Activated naive CD4-positive, alpha-beta T cell treated with anti-CD3 and anti-CD28 coated beads for 36 hours (primary cell): ENCODE measurements at regions of chr6 and their contacts with region 1.

Region 1: GRCh38 chr6:11224252-11224965 is 8.1 kb downstream of the NEDD9 start:
- DNase-seq: peak; percentile 63
- H3K4me3 Mint-ChIP-seq: no peak overlapping the region
- H3K27ac Mint-ChIP-seq: peak overlapping the region; percentile 46
- H3K4me1 Mint-ChIP-seq: peaks cover 28% of the 10 kb centered on the region
- H3K27me3 Mint-ChIP-seq: no peaks in the 10 kb centered on the region

Region 2: DNA sequence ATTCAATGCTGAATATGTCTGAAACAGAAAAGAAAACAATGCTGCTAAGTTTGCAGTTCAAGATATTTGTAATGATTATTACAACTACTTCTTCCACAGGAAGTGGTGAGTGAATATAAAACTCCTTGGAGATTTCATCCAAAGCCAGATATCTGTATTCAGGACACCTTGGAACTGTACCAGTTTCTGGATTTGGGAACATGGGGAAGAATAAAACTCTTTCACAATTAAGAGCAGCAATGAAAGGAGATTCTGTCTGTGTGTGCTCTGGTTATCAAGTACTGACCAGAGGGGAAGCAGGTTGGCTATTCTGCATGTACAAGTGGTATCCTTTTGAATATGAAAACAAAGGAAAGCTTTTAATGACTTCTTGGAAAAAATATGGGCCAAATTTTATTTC is 201.4 kb before region 1 on chr6:
- CTCF ChIA-PET with region 1: no interaction called
- intact Hi-C with region 1: no loop called
- DNase-seq: no peak
- H3K4me3 Mint-ChIP-seq: no peak overlapping the region
- H3K27ac Mint-ChIP-seq: no peak overlapping the region
- H3K4me1 Mint-ChIP-seq: no peaks in the 10 kb centered on the region
- H3K27me3 Mint-ChIP-seq: peaks cover 16% of the 10 kb centered on the region

Region 3: DNA sequence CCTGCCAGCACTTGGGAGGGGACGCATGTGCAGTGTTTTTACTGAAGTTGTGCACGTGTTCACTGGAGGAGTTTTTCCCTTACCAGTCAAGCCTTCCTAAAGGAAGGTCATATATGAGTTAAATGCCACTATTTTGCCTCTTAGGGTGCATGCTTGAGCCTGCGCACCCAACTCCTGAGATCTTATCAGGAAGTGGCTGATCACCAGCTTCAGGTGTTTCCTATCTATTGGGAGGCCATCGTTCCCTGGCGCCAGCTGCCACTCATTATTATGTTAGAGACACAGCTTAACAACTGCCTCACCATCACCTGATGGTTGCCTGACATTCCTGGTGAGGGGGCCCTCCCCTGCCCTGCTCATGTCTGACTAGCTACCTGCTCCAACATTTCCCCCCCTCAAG is 121.3 kb before region 1 on chr6:
- CTCF ChIA-PET with region 1: no interaction called
- intact Hi-C with region 1: no loop called
- DNase-seq: no peak
- H3K4me3 Mint-ChIP-seq: no peak overlapping the region
- H3K27ac Mint-ChIP-seq: no peak overlapping the region
- H3K4me1 Mint-ChIP-seq: peaks cover 15% of the 10 kb centered on the region
- H3K27me3 Mint-ChIP-seq: no peaks in the 10 kb centered on the region

Region 4: GRCh38 chr6:11198663-11199603 is 25.5 kb before region 1 on chr6:
- CTCF ChIA-PET with region 1: no interaction called
- intact Hi-C with region 1: loop called (anchors 2 kb)
- DNase-seq: peak; percentile 47
- H3K4me3 Mint-ChIP-seq: no peak overlapping the region
- H3K27ac Mint-ChIP-seq: peak overlapping the region; percentile 71
- H3K4me1 Mint-ChIP-seq: peaks cover 40% of the 10 kb centered on the region
- H3K27me3 Mint-ChIP-seq: no peaks in the 10 kb centered on the region